Tibial artery (tissue), 4 donors: ENCODE measurements at regions of chr11 and their contacts with region 1.

Region 1: GRCh38 chr11:503179-503981 is 3.7 kb downstream of the RNH1 start:
- DNase-seq: peak; percentile 76 to 84
- H3K4me3 ChIP-seq: peak overlapping the region; percentile 57 to 72
- H3K27ac ChIP-seq: peak overlapping the region; percentile 96 to 99
- H3K4me1 ChIP-seq: peaks cover 5 to 55% (median 47%) of the 10 kb centered on the region in 4 donors
- H3K27me3 ChIP-seq: no peaks in the 10 kb centered on the region
- CTCF ChIP-seq: no peak

Region 2: DNA sequence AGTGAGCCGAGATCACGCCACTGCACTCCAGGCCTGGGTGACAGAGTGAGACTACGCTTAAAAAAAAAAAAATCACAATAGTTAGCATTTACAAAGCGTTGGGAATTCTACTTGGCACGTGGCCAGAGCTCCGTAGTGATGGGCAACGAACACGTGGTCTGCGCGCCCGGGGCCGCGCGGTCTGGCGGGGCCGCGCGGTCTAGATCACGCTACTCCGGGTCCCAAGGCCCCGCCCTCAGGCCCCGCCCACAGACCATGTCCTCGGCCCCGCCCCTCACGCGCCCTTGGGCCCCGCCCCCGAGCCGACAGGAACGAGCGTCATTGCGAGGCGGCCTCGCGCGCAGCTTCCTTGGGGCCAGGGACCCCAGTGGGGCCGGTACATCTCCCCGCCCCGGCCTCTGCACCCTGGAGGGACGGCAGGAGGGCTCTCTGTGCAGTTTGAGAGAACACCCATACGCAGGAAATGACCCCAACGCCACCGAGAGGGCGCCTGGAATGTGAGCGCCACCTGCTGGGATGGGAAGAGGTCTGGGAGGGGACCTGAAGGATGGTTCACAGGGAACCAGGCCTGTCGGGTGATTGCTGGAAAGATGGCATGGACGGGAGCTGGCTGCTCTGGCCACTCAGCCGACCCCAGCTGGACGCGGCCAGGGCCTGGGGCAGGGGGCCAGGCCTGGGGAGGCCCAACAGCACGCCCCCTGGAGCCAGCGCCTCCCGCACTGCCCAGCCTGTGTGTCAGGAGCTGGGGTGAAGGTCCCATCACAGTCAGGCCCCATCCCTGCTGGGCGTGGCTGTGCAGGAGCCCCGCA is 55.3 kb before region 1 on chr11:
- intact Hi-C with region 1: loop called (anchors 5 kb)
- DNase-seq: peak; percentile 95 to 96
- H3K4me3 ChIP-seq: peak overlapping the region; percentile 58 to 64
- H3K27ac ChIP-seq: peak overlapping the region; percentile 84 to 89
- H3K4me1 ChIP-seq: peaks cover 0 to 35% (median 29%) of the 10 kb centered on the region in 4 donors
- H3K27me3 ChIP-seq: peaks cover 0 to 24% of the 10 kb centered on the region in 2 donors
- CTCF ChIP-seq: peak; percentile 74 to 75